ENCODE measurements at regions of chr9 and their contacts with region 1.

Region 1: GRCh38 chr9:98074115-98074990 is 17.8 kb downstream of the NANS start:
- DNase-seq: peak; percentile 54
- H3K4me3 Mint-ChIP-seq: no peak overlapping the region
- H3K27ac Mint-ChIP-seq: peak overlapping the region; percentile 92
- H3K4me1 Mint-ChIP-seq: peaks cover 43% of the 10 kb centered on the region
- H3K27me3 Mint-ChIP-seq: no peaks in the 10 kb centered on the region

Region 2: GRCh38 chr9:98010445-98010844 is 63.9 kb before region 1 on chr9:
- intact Hi-C with region 1: no loop called
- DNase-seq: no peak
- H3K4me3 Mint-ChIP-seq: no peak overlapping the region
- H3K27ac Mint-ChIP-seq: peak overlapping the region; percentile 61
- H3K4me1 Mint-ChIP-seq: peaks cover 24% of the 10 kb centered on the region
- H3K27me3 Mint-ChIP-seq: no peaks in the 10 kb centered on the region

Region 3: GRCh38 chr9:98056269-98057137 is 17.9 kb before region 1 on chr9 and contains the start of gene NANS:
- intact Hi-C with region 1: loop called (anchors 1 kb)
- DNase-seq: peak; percentile 90
- H3K4me3 Mint-ChIP-seq: peak within 1 kb of the TSS; percentile 98
- H3K27ac Mint-ChIP-seq: peak within 1 kb of the TSS; percentile 97
- H3K4me1 Mint-ChIP-seq: peaks cover 33% of the 10 kb centered on the region
- H3K27me3 Mint-ChIP-seq: no peaks in the 10 kb centered on the region
- total RNA-seq, gene NANS: 54.4 and 55.5 TPM in 2 replicates

Region 4: DNA sequence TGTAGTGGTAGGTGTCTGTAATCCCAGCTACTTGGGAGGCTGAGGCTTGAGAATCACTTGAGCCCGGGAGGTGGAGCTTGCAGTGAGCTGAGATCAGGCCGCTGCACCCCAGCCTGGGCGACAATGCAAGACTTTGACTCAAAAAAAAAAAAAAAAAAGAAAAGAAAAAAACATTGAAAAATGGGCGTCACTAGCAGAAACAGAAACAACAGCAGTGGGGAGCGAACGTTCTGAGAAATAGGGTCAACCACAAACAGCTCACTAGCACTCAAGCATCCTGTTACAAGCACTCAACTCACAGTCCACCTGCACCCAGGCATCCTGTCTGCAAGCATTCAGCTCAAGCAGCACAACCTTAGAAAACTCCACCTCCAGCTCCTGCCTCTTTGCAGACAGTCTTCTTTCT is 27.5 kb after region 1 on chr9:
- intact Hi-C with region 1: loop called (anchors 1 kb)
- DNase-seq: peak; percentile 83
- H3K4me3 Mint-ChIP-seq: peak overlapping the region; percentile 69
- H3K27ac Mint-ChIP-seq: peak overlapping the region; percentile 88
- H3K4me1 Mint-ChIP-seq: peaks cover 85% of the 10 kb centered on the region
- H3K27me3 Mint-ChIP-seq: no peaks in the 10 kb centered on the region

Region 5: GRCh38 chr9:98118640-98119601 is 44.6 kb after region 1 on chr9 and contains the start of gene TRIM14:
- intact Hi-C with region 1: loop called (anchors 1 kb)
- DNase-seq: peak; percentile 71
- H3K4me3 Mint-ChIP-seq: peak within 1 kb of the TSS; percentile 95
- H3K27ac Mint-ChIP-seq: peak within 1 kb of the TSS; percentile 98
- H3K4me1 Mint-ChIP-seq: peaks cover 42% of the 10 kb centered on the region
- H3K27me3 Mint-ChIP-seq: no peaks in the 10 kb centered on the region
- total RNA-seq, gene TRIM14: 41.7 and 42.0 TPM in 2 replicates

Region 6: DNA sequence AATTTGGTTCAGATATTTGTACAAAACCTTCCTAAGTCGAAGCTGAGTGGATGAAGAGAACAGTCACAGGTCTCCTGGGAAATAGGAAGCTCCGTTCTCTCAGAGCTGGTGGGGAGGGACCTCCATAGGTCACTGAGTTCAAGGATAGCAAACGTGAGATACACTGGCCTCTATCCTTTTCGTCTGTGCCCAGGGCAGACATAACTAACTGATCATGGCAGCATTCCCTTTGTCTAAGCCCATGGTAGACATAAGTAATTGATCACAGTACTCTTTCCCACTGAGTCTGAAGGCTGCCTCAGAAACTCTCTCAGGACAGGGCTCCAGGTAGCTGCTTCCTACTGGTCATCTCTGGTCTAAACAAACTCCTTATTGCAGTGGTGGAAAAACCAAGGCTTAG is 130.3 kb after region 1 on chr9:
- intact Hi-C with region 1: loop called (anchors 1 kb)
- DNase-seq: no peak
- H3K4me3 Mint-ChIP-seq: no peak overlapping the region
- H3K27ac Mint-ChIP-seq: no peak overlapping the region
- H3K4me1 Mint-ChIP-seq: peaks cover 9% of the 10 kb centered on the region
- H3K27me3 Mint-ChIP-seq: no peaks in the 10 kb centered on the region

Region 7: GRCh38 chr9:98263482-98264357 is 189.4 kb after region 1 on chr9:
- intact Hi-C with region 1: loop called (anchors 1 kb)
- DNase-seq: peak; percentile 72
- H3K4me3 Mint-ChIP-seq: no peak overlapping the region
- H3K27ac Mint-ChIP-seq: no peak overlapping the region
- H3K4me1 Mint-ChIP-seq: no peaks in the 10 kb centered on the region
- H3K27me3 Mint-ChIP-seq: peaks cover 9% of the 10 kb centered on the region

Measured in activated T-helper 1 cell treated with anti-CD3 and anti-CD28 coated beads, Interleukin-12 subunit alpha, Interleukin-12 subunit beta, Interleukin-2, Interleukin-4 antibody, amounts not matched to agents 30 ng/mL and 10 ng/mL and 1 ng/mL, durations not matched to agents 14 hours and 24 hours and 36 hours (primary cell).